GM12878 (cell line): ENCODE measurements at regions of chr10 and their contacts with region 1.

Region 1: GRCh38 chr10:88810196-88810961 is 7.8 kb downstream of the LIPM start:
- DNase-seq: no peak
- ATAC-seq: peak; percentile 91
- H3K4me3 ChIP-seq: no peak overlapping the region
- H3K27ac ChIP-seq: no peak overlapping the region
- H3K4me1 ChIP-seq: no peaks in the 10 kb centered on the region
- H3K27me3 ChIP-seq: peaks cover 0 to 2% of the 10 kb centered on the region in 2 experiments; a peak in 2 of 4 replicates
- CTCF ChIP-seq: peak; percentile 70 to 77 (median 75)
- EP300 ChIP-seq: no peak
- POLR2A ChIP-seq: no peak
- RAD21 ChIP-seq: peak; percentile 79

Region 2: GRCh38 chr10:88565072-88565471 is 245.3 kb before region 1 on chr10:
- CTCF ChIA-PET with region 1: interaction called, 25 read pairs
- POLR2A ChIA-PET with region 1: no interaction called
- RAD21 ChIA-PET with region 1: interaction called, 3 read pairs
- SMC1A ChIA-PET with region 1: interaction called, 5 read pairs
- in situ Hi-C with region 1: loop called (anchors 5 kb)
- intact Hi-C with region 1: loop called (anchors 1 kb)
- DNase-seq: no peak
- ATAC-seq: peak; percentile 82
- H3K4me3 ChIP-seq: no peak overlapping the region
- H3K27ac ChIP-seq: no peak overlapping the region
- H3K4me1 ChIP-seq: no peaks in the 10 kb centered on the region
- H3K27me3 ChIP-seq: no peaks in the 10 kb centered on the region
- CTCF ChIP-seq: peak; percentile 30 to 63 (median 40); a peak in 5 of 6 replicates
- EP300 ChIP-seq: no peak
- POLR2A ChIP-seq: no peak
- RAD21 ChIP-seq: peak; percentile 73

Region 3: GRCh38 chr10:88687853-88688467 is 122.4 kb before region 1 on chr10:
- CTCF ChIA-PET with region 1: interaction called, 71 read pairs
- POLR2A ChIA-PET with region 1: no interaction called
- RAD21 ChIA-PET with region 1: interaction called, 11 read pairs
- SMC1A ChIA-PET with region 1: interaction called, 20 read pairs
- in situ Hi-C with region 1: loop called (anchors 5 kb)
- intact Hi-C with region 1: loop called (anchors 1 kb)
- DNase-seq: no peak
- ATAC-seq: peak; percentile 53
- H3K4me3 ChIP-seq: no peak overlapping the region
- H3K27ac ChIP-seq: no peak overlapping the region
- H3K4me1 ChIP-seq: no peaks in the 10 kb centered on the region
- H3K27me3 ChIP-seq: no peaks in the 10 kb centered on the region
- CTCF ChIP-seq: peak; percentile 69 to 70 (median 70)
- EP300 ChIP-seq: no peak
- POLR2A ChIP-seq: no peak
- RAD21 ChIP-seq: peak; percentile 84

Region 4: DNA sequence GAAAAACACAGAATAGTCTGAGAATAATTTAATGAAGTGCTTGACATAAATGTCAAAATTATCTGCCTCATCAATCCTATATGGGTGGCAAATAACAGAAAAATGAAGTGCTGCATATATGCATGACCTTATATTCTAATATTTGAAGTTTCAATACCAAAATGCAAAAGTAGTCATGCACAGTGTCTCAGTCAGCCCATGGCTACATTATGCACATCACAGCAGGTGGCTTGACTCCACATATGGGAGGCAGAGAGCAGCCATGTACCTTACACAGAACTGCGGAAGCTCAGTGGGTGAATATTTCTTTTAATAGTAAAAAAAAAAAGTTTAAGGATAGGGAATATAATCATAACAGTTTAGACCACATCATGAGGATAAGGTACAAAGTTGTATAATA is 67.9 kb before region 1 on chr10:
- CTCF ChIA-PET with region 1: interaction called, 10 read pairs
- POLR2A ChIA-PET with region 1: no interaction called
- RAD21 ChIA-PET with region 1: no interaction called
- SMC1A ChIA-PET with region 1: interaction called, 3 read pairs
- in situ Hi-C with region 1: no loop called
- intact Hi-C with region 1: no loop called
- DNase-seq: no peak
- ATAC-seq: no peak
- H3K4me3 ChIP-seq: no peak overlapping the region
- H3K27ac ChIP-seq: no peak overlapping the region
- H3K4me1 ChIP-seq: no peaks in the 10 kb centered on the region; the same call in 1 of the 2 replicates
- H3K27me3 ChIP-seq: no peaks in the 10 kb centered on the region; a peak in 1 of 4 replicates
- CTCF ChIP-seq: no peak
- EP300 ChIP-seq: no peak
- POLR2A ChIP-seq: no peak
- RAD21 ChIP-seq: no peak

Region 5: DNA sequence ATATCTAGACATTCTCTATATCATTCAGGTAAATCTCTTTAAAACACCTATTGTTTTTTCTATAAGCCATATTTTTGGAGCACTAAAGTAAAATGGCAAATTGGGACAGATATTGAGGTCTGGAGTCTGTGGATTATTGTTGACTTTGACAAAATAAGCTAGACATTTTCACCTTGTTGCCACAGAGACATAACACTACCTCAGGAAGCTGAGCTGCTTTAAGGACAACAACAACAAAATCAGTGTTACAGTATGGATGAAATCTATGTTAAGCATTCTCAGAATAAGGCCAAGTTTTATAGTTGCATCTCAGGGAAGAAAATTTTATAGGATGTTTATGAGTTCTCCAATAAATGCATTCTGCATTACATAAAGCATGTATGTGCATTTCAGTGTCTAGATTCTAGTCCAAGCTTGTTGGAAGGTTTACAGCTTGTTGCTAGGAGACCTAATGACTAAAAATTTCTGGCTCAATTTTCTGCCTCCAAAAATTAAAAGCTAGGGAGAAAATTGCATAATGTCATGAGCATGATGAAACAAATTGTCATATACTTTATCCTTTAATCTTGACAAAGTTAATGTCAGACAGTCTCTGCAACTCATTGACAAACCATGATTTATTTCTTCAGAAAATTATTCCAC is 10.5 kb after region 1 on chr10:
- CTCF ChIA-PET with region 1: interaction called, 13 read pairs
- POLR2A ChIA-PET with region 1: interaction called, 3 read pairs
- RAD21 ChIA-PET with region 1: interaction called, 5 read pairs
- SMC1A ChIA-PET with region 1: interaction called, 7 read pairs
- in situ Hi-C with region 1: no loop called
- intact Hi-C with region 1: no loop called
- DNase-seq: no peak
- ATAC-seq: no peak
- H3K4me3 ChIP-seq: no peak overlapping the region
- H3K27ac ChIP-seq: no peak overlapping the region
- H3K4me1 ChIP-seq: 0 out of 2 replicates have a peak, but pooled peaks cover 3% of the 10 kb centered on the region
- H3K27me3 ChIP-seq: 0 out of 4 replicates have a peak, but pooled peaks cover 0 to 2% of the 10 kb centered on the region in 2 experiments
- CTCF ChIP-seq: no peak
- EP300 ChIP-seq: no peak
- POLR2A ChIP-seq: no peak
- RAD21 ChIP-seq: no peak